Body of pancreas (tissue), 4 donors: ENCODE measurements at regions of chr3 and their contacts with region 1.

Region 1: DNA sequence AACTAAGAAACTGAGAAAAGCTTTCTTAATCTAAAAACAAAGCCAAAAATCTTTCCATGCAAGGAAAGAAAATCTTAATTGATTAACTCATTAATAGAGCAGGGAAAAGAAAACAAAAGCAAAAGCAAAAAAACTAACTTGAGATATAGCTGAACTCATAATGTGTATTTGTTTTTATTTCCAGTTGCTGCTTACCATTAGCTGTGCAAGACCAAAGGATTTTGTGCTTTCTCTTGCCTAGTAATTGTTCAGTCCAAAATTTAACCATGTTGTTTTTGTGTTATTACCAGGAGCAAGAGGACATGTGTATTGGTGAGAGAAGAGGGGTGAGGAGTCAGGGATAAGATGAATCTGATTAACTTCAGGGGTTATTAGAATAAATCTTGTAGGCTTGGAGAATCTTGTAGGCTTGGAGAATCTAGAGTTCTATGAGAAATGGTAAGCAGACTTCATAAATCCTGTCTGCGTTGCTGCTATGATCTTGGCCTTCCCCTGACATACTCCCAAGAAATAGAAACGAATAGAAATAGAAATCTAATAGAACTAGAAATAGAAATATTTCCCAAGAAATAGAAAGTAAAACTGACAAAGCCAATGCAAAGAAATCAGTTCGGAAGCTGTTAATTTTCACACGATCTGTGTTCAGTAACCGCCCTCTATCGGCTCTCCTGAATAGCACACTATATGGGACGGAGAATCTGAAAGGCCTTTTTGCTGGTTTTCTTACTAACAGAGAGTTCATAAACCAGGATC is 72.6 kb upstream of the TNFSF10 start:
- DNase-seq: peak; percentile 44 to 71 (median 58)
- ATAC-seq: peak; percentile 78
- H3K4me3 ChIP-seq: no peak overlapping the region
- H3K27ac ChIP-seq: peak overlapping the region; percentile 37 to 92 (median 88)
- H3K4me1 ChIP-seq: peaks cover 22% of the 10 kb centered on the region
- H3K27me3 ChIP-seq: no peaks in the 10 kb centered on the region
- CTCF ChIP-seq: peak; percentile 26 to 91 (median 85)
- POLR2A ChIP-seq: no peak

Region 2: DNA sequence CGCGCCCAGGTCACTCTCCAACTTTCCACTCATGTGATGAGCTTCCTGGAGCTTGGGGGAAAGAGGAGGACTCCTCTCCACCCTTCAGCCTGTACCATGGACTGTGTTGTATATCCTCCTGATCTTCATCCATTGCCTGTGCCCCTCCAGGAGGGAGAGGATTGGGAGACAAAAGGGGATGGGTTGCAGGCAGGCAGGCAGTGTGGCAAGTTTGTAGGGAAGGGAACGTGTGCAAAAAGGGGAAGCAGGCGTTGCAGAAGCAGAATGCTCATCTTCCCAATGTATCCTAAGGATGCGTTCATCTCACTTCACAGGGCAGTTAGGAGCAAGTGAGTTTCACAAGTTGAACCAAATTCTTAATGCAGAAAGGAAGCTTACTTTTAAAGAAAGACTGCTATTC is 119.5 kb before region 1 on chr3:
- intact Hi-C with region 1: loop called (anchors 10 kb)
- DNase-seq: no peak
- ATAC-seq: no peak
- H3K4me3 ChIP-seq: no peak overlapping the region
- H3K27ac ChIP-seq: no peak overlapping the region
- H3K4me1 ChIP-seq: no peaks in the 10 kb centered on the region
- H3K27me3 ChIP-seq: no peaks in the 10 kb centered on the region
- CTCF ChIP-seq: no peak
- POLR2A ChIP-seq: no peak

Region 3: GRCh38 chr3:172776049-172776717 is 180.4 kb after region 1 on chr3:
- intact Hi-C with region 1: no loop called
- DNase-seq: no peak
- ATAC-seq: no peak
- H3K4me3 ChIP-seq: no peak overlapping the region
- H3K27ac ChIP-seq: no peak overlapping the region
- H3K4me1 ChIP-seq: no peaks in the 10 kb centered on the region
- H3K27me3 ChIP-seq: no peaks in the 10 kb centered on the region
- CTCF ChIP-seq: no peak
- POLR2A ChIP-seq: no peak